Transverse colon (tissue), 4 donors: ENCODE measurements at regions of chr19 and their contacts with region 1.

Region 1: GRCh38 chr19:15555759-15556633 is 47.7 kb downstream of the CYP4F22 start:
- DNase-seq: peak; percentile 91
- H3K4me3 ChIP-seq: peak overlapping the region in 2 of 4 donors; percentile 29 to 34
- H3K27ac ChIP-seq: peak overlapping the region in 3 of 4 donors; percentile 7 to 63 (median 10)
- H3K4me1 ChIP-seq: peaks cover 3 to 16% (median 13%) of the 10 kb centered on the region in 4 donors
- H3K27me3 ChIP-seq: peaks cover 29% of the 10 kb centered on the region
- CTCF ChIP-seq: peak; percentile 71 to 83 (median 76)
- EP300 ChIP-seq: no peak
- POLR2A ChIP-seq: no peak

Region 2: DNA sequence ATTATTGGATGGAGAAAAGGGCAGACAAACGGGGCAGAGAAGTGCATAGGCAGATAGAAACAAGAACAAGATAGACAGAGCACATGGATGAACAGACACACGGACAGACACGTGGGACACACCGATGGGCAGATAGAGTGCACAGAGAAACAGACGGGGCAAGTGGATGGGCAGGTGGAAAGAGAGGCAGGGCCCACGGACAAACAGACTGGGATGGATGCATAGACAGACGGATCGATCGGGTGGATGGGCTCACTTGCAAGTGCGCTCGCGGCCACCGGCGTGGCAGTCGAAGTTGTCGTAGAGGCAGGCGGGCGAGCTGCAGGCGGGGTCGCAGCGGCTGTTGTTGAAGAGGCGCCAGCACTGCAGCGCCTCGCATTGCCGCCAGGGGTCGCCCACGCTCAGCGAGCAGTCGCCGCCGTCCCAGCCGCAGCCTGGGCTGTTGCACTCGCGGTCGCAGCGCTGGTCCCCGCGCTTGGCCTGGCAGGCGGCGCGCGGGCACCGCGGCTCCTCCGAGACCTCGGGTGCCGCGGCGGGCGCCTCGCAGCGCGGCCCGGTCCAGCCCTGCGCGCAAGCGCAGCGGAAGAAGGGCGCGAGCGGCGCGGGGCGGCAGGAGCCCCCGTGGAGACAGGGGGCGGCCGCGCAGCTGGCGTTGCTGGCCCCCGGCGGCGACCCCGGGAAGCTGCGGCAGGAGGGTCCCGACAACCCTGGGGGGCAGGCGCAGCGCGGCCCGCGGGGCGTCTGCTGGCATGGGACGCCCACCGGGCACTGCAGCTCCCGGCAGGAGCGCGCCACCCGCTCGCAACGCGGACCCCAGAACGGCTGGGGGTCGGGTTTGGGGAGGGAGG is 378.5 kb before region 1 on chr19:
- in situ Hi-C with region 1: loop called (anchors 5 to 10 kb)
- intact Hi-C with region 1: loop called (anchors 2 kb)
- DNase-seq: peak; percentile 83
- H3K4me3 ChIP-seq: peak overlapping the region in 2 of 4 donors; percentile 28 to 31
- H3K27ac ChIP-seq: no peak overlapping the region
- H3K4me1 ChIP-seq: peaks cover 0 to 8% (median 6%) of the 10 kb centered on the region in 4 donors
- H3K27me3 ChIP-seq: peaks cover 8% of the 10 kb centered on the region
- CTCF ChIP-seq: peak; percentile 77 to 97 (median 92)
- EP300 ChIP-seq: no peak
- POLR2A ChIP-seq: no peak

Region 3: GRCh38 chr19:15251749-15252397 is 304.1 kb before region 1 on chr19:
- in situ Hi-C with region 1: no loop called
- intact Hi-C with region 1: loop called (anchors 5 kb)
- DNase-seq: peak; percentile 67
- H3K4me3 ChIP-seq: peak overlapping the region in 1 of 4 donors; percentile 2
- H3K27ac ChIP-seq: peak overlapping the region; percentile 82 to 90 (median 83)
- H3K4me1 ChIP-seq: peaks cover 42 to 59% (median 52%) of the 10 kb centered on the region in 4 donors
- H3K27me3 ChIP-seq: no peaks in the 10 kb centered on the region
- CTCF ChIP-seq: peak; percentile 31 to 58 (median 36)
- EP300 ChIP-seq: peak; percentile 46
- POLR2A ChIP-seq: no peak

Region 4: DNA sequence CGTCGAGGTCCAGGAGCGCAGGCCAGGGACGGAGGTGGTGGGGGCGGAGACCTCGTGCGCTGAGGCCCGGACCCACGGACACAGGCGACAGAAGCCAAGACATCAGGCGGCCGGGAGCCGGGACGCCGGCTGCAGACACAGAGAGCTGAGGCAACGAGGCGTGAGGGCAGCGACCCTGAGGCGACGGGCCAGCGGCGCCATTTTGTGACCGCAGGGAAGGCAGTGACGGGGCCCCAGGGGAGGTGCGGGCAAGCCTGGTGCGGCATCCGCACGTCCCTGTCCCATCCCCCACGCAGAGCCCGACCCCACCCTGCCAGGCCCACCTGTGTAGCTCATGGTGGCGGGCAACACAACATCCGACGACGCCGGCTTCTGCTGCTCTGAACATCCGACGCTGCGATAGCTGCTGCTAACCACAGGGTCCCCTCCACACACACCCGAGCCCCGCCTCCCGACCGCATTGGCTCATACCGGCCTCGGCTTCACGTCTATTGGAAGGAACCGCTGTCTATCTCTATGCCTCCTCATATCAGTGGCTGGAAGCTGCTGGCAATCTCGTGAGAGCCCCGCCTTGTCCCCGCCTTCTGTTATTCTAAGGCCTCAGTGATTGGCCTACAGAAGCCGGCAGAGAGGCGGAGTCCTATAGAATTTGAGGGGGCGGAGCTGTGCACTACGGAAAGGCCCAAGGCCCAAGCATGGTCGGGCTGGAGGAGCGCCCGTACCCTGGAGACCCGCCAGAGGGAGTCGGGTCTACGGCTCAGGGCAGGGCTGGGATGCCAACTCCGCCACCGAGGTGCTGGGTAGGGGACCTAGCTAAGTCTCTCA is 137.2 kb before region 1 on chr19 and contains the start of gene AKAP8L:
- in situ Hi-C with region 1: loop called in 3 of 4 experiments (anchors 10 kb)
- intact Hi-C with region 1: no loop called
- DNase-seq: peak; percentile 99
- H3K4me3 ChIP-seq: peak within 1 kb of the TSS; percentile 68 to 94 (median 80)
- H3K27ac ChIP-seq: peak within 1 kb of the TSS; percentile 86 to 93 (median 91)
- H3K4me1 ChIP-seq: peaks cover 12 to 44% (median 22%) of the 10 kb centered on the region in 4 donors
- H3K27me3 ChIP-seq: no peaks in the 10 kb centered on the region
- CTCF ChIP-seq: peak; percentile 47 to 89 (median 63)
- EP300 ChIP-seq: no peak
- POLR2A ChIP-seq: peak; percentile 88
- total RNA-seq, gene AKAP8L: 112 to 329 (median 172) TPM

Region 5: GRCh38 chr19:15614507-15615379 is 58.7 kb after region 1 on chr19 and contains the start of gene CYP4F8:
- in situ Hi-C with region 1: no loop called
- intact Hi-C with region 1: no loop called
- DNase-seq: no peak
- H3K4me3 ChIP-seq: no peak within 1 kb of the TSS
- H3K27ac ChIP-seq: no peak within 1 kb of the TSS
- H3K4me1 ChIP-seq: no peaks in the 10 kb centered on the region
- H3K27me3 ChIP-seq: peaks cover 5% of the 10 kb centered on the region
- CTCF ChIP-seq: no peak
- EP300 ChIP-seq: no peak
- POLR2A ChIP-seq: no peak
- total RNA-seq, gene CYP4F8: not detected